ENCODE measurements at regions of chr3 and their contacts with region 1.

Region 1: DNA sequence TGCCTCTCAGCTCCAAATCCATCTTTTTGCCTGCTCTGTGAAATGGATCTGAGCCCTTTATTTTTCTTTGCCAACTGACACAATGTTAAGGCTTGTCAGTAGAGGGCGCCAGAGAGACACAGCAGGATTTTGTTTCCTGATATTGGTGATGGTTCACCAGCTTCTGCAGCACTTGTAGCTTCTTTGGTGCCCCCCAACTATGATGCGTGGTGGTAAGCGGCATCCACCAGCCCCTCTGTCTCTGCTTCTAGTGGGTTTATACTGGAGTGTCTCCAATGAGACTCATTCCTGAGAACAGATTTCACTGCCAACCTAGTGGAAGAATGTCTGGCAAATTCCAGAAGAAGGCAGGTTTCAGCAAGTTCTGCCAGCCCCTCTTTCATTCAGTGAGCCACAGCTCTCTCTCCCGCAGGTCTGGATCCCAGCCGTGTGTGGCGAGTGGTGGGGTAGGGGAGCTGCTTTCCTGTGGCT is 471.9 kb upstream of the FRG2C start:
- DNase-seq: peak; percentile 29
- CTCF ChIP-seq: peak; percentile 84

Region 2: GRCh38 chr3:75171630-75172230 is 20.5 kb before region 1 on chr3:
- CTCF ChIA-PET with region 1: interaction called, 18 read pairs
- POLR2A ChIA-PET with region 1: no interaction called
- DNase-seq: no peak
- CTCF ChIP-seq: peak; percentile 41

Region 3: DNA sequence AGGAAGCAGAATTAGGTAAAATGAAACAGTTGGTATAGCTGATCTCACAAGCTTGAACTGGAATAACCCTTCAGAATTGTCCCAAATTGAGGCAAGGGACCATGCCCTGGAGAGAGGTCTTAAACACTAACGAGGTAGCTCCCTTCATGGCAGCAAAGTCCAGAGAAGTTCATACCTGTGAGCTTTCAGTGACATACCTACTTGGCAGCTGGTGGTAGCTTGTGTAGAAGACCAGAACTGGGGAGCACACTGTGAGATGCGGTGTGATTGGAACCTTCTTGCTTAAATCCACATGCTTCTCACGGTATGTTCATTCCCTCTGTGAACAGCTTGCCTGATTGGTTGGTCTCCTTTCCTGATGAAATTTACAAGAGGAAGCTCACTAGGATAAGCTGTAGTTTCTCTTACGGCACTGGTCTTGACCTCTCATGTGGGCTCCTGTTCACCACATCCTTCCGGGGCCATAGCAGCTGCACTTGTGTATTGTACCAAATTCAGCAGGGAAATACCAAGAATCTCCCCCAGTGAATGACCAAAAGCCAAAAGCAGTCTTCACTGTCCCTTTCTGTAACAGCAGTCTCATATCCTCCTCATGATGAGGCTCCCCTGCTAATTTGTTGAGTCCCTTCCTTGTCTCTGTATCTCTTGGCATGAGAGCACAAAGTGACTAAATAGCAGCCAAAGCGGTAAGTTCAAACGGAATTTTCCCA is 11.8 kb before region 1 on chr3:
- CTCF ChIA-PET with region 1: interaction called, 24 read pairs
- POLR2A ChIA-PET with region 1: no interaction called
- DNase-seq: no peak
- CTCF ChIP-seq: no peak

Region 4: DNA sequence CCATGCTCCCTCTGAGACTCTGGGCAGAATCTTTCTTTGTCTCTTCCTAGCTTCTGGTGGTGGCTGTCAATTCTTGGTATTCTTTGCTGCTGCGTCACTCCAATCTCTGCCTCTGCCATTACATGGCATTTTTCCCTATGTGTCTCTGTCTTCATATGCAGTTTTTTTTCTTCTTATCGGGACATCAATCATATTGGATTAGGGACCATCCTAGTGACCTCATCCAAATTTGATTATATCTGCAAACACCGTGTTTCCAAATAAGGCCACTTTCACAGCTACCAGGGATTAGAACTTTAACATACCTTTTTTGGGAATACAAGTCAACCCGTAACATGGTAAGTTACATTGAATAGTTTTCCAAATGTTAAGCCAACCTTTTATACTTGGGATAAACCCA is 113.7 kb after region 1 on chr3:
- CTCF ChIA-PET with region 1: no interaction called
- POLR2A ChIA-PET with region 1: no interaction called
- DNase-seq: no peak
- CTCF ChIP-seq: no peak

Measured in GM10248 (cell line).